ENCODE measurements at regions of chr9 and their contacts with region 1.

Region 1: DNA sequence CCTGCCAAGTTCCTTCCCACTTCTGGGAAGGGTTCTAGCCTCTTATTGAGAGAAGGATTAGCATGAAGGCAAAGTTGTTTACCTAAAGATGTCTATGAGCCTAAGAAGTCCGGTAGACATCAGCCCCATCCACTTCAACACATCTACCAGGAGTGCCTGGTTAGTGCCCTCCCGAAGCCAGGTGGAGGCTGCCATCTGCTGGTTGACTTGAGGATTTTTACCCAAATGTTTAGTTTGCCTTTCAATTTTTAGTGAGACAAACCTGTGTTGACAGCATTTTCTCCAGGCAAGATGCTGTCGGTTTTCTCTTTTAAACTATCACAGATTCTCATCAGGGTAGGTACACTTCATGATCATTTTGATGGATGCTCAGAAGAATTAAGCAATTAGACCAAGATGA is 83.6 kb upstream of the TNFSF8 start:
- DNase-seq: peak; percentile 60 to 86 (median 79)
- ATAC-seq: peak; percentile 79
- H3K4me3 ChIP-seq: no peak overlapping the region
- H3K4me3 Mint-ChIP-seq: no peak overlapping the region
- H3K27ac ChIP-seq: no peak overlapping the region
- H3K27ac Mint-ChIP-seq: no peak overlapping the region
- H3K4me1 ChIP-seq: peaks cover 7% of the 10 kb centered on the region
- H3K4me1 Mint-ChIP-seq: peaks cover 9% of the 10 kb centered on the region
- H3K27me3 ChIP-seq: no peaks in the 10 kb centered on the region
- H3K27me3 Mint-ChIP-seq: no peaks in the 10 kb centered on the region
- CTCF ChIP-seq: peak; percentile 89

Region 2: GRCh38 chr9:114339130-114339908 is 674.7 kb before region 1 on chr9:
- CTCF ChIA-PET with region 1: no interaction called
- POLR2A ChIA-PET with region 1: no interaction called
- intact Hi-C with region 1: loop called in 1 of 2 experiments (anchors 10 kb)
- DNase-seq: peak; percentile 27 to 76 (median 52)
- ATAC-seq: peak; percentile 65
- H3K4me3 ChIP-seq: no peak overlapping the region
- H3K4me3 Mint-ChIP-seq: no peak overlapping the region
- H3K27ac ChIP-seq: peak overlapping the region in 1 of 2 experiments; percentile 40
- H3K27ac Mint-ChIP-seq: peak overlapping the region; percentile 45
- H3K4me1 ChIP-seq: no peaks in the 10 kb centered on the region
- H3K4me1 Mint-ChIP-seq: peaks cover 34% of the 10 kb centered on the region
- H3K27me3 ChIP-seq: no peaks in the 10 kb centered on the region
- H3K27me3 Mint-ChIP-seq: no peaks in the 10 kb centered on the region
- CTCF ChIP-seq: peak; percentile 83

Region 3: DNA sequence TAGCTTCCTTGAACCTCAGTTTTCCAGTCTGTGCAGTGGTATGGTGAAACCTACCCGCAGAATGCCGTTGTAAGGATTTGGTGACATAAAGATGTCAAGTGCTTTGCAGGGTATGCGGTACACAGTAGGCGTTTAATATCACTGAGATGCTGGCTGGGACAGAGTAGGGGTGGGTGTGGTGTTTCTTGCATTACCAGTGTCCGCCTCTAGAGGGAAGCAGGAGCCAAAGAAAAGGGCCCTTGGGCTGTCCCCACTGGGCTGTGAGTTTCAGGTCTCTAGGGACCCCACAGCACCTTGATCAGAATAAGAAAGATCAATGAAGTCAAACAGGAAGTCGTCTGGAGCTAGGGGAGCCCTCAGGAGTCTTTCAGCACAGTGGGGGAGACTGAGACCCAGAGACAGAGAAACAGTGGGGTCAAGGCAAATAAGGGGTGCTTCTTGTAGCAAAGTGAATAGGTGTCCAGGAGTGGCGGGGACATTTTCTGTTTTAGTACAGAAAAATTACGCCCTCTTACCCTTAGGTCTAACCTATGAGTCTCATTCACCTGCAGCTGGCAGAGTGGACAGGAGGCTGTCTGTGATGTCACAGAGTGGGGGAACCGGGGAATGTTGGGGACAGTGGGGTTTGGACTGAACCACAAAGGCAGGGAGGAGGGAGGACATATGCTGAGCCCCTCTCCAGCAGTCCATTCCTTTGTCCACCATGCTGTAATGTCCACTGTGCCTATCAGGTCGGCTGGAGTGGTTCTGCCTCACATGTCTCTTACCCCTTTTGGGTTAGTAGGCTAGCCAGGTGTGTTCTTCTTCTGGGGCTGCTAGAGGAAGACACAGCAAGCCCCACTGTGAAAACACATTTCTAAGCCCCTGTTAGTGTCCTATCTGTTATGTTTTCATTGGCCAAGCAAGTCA is 351.7 kb before region 1 on chr9:
- CTCF ChIA-PET with region 1: interaction called, 7 read pairs
- POLR2A ChIA-PET with region 1: no interaction called
- intact Hi-C with region 1: loop called (anchors 1 kb)
- DNase-seq: peak; percentile 26 to 70 (median 62)
- ATAC-seq: peak; percentile 93
- H3K4me3 ChIP-seq: no peak overlapping the region
- H3K4me3 Mint-ChIP-seq: no peak overlapping the region
- H3K27ac ChIP-seq: no peak overlapping the region
- H3K27ac Mint-ChIP-seq: no peak overlapping the region
- H3K4me1 ChIP-seq: no peaks in the 10 kb centered on the region
- H3K4me1 Mint-ChIP-seq: no peaks in the 10 kb centered on the region
- H3K27me3 ChIP-seq: no peaks in the 10 kb centered on the region
- H3K27me3 Mint-ChIP-seq: peaks cover 2% of the 10 kb centered on the region
- CTCF ChIP-seq: peak; percentile 90

Region 4: DNA sequence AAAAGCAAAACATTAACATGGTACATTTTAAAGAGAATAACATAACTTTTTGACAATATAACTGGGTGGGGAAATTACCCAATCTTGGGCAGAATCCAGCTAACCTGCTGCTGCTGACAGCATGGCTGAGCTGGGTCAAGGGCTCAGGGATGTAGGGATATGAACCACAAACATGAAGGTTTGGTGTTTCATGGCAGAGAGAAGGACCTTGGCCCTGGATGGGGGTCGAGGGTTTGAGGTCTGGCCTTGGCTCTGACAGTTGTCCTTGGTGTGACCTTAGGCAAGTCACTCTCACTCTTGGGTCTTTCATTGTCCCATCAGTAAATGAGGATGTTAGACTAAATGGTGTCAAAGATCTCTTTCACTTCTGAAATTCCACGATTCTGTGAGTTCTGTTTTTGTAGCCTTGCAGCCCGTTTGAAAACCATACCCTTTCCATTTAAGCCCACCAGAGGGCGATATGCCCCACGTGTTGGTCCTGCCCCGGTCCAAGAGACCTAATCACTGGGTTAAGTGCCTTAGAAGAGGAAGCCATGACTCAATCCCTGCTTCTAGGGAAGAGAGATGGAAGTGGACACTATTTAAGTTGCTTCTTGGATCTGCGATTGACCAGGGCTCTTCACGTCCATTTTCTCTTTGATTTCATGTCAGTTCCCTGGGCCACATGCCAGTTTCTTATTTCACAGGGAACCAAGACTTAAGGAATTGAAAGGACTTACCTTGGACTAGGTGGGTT is 275.2 kb before region 1 on chr9:
- CTCF ChIA-PET with region 1: interaction called, 73 read pairs
- POLR2A ChIA-PET with region 1: interaction called, 3 read pairs
- intact Hi-C with region 1: loop called (anchors 1 kb)
- DNase-seq: peak; percentile 51 to 85 (median 74)
- ATAC-seq: peak; percentile 80
- H3K4me3 ChIP-seq: no peak overlapping the region
- H3K4me3 Mint-ChIP-seq: no peak overlapping the region
- H3K27ac ChIP-seq: no peak overlapping the region
- H3K27ac Mint-ChIP-seq: peak overlapping the region; percentile 47
- H3K4me1 ChIP-seq: peaks cover 25% of the 10 kb centered on the region
- H3K4me1 Mint-ChIP-seq: peaks cover 40% of the 10 kb centered on the region
- H3K27me3 ChIP-seq: no peaks in the 10 kb centered on the region
- H3K27me3 Mint-ChIP-seq: no peaks in the 10 kb centered on the region
- CTCF ChIP-seq: peak; percentile 92

Region 5: GRCh38 chr9:115289757-115290208 is 275.8 kb after region 1 on chr9:
- CTCF ChIA-PET with region 1: no interaction called
- POLR2A ChIA-PET with region 1: no interaction called
- intact Hi-C with region 1: no loop called
- DNase-seq: no peak
- ATAC-seq: no peak
- H3K4me3 ChIP-seq: no peak overlapping the region
- H3K4me3 Mint-ChIP-seq: no peak overlapping the region
- H3K27ac ChIP-seq: no peak overlapping the region
- H3K27ac Mint-ChIP-seq: no peak overlapping the region
- H3K4me1 ChIP-seq: no peaks in the 10 kb centered on the region
- H3K4me1 Mint-ChIP-seq: no peaks in the 10 kb centered on the region
- H3K27me3 ChIP-seq: no peaks in the 10 kb centered on the region
- H3K27me3 Mint-ChIP-seq: peaks cover 3% of the 10 kb centered on the region
- CTCF ChIP-seq: no peak

Region 6: GRCh38 chr9:115524453-115525059 is 510.6 kb after region 1 on chr9:
- CTCF ChIA-PET with region 1: no interaction called
- POLR2A ChIA-PET with region 1: no interaction called
- intact Hi-C with region 1: loop called in 1 of 2 experiments (anchors 10 kb)
- DNase-seq: peak in 2 of 9 experiments; percentile 30 to 39
- ATAC-seq: no peak
- H3K4me3 ChIP-seq: no peak overlapping the region
- H3K4me3 Mint-ChIP-seq: no peak overlapping the region
- H3K27ac ChIP-seq: no peak overlapping the region
- H3K27ac Mint-ChIP-seq: no peak overlapping the region
- H3K4me1 ChIP-seq: no peaks in the 10 kb centered on the region
- H3K4me1 Mint-ChIP-seq: no peaks in the 10 kb centered on the region
- H3K27me3 ChIP-seq: no peaks in the 10 kb centered on the region
- H3K27me3 Mint-ChIP-seq: peaks cover 22% of the 10 kb centered on the region
- CTCF ChIP-seq: peak; percentile 40

Measured in CD8-positive, alpha-beta T cell (primary cell).